Activated T-helper 1 cell treated with anti-CD3 and anti-CD28 coated beads, Interleukin-12 subunit alpha, Interleukin-12 subunit beta, Interleukin-2, Interleukin-4 antibody, amounts not matched to agents 30 ng/mL and 10 ng/mL and 1 ng/mL, durations not matched to agents 14 hours and 24 hours and 36 hours (primary cell): ENCODE measurements at regions of chr3 and their contacts with region 1.

Region 1: DNA sequence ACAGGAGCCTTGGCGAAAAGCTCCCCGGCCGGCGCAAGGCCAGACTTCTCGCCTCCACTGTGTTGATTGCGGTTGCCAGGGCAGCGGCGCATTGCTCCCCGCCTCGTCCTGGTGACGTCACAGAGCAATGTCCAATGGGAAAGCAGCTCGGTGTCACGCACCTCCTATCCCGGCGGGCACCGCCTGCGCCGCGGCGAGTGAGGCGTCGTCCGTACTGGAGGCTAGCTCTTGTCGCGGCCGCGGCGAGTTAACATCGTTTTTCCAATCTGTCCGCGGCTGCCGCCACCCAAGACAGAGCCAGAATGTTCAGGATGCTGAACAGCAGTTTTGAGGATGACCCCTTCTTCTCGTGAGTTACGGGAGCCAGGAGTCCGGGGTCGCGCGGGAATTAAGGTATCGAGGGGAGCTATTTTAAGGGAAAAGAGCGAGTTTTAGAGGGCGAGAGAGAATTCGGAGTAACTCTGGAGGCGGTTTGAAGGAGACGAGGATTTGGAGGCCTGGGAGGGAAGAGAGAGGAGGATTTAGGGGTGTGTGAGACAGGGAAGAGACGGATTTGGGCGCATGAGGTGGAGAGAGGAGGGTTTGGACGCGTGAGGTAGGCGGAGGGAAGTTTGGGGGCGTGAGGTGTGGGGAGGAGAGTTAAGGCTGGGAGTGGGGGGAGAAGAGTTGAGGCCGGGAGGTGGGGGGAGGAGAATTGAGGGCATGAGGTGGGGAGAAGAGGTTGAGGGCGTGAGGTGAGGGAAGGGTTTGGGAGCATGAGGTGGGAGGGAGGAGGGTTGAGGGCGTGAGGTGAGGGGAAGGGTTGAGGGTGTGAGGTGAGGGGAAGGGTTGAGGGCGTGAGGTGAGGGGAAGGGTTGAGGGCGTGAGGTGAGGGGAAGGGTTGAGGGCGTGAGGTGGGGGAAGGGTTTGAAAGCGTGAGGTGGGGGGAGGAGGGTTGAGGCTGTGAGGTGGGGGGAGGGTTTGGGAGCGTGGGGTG is at the start of gene MLF1:
- DNase-seq: peak; percentile 80
- H3K4me3 Mint-ChIP-seq: peak within 1 kb of the TSS; percentile 85
- H3K27ac Mint-ChIP-seq: peak within 1 kb of the TSS; percentile 83
- H3K4me1 Mint-ChIP-seq: peaks cover 13% of the 10 kb centered on the region
- H3K27me3 Mint-ChIP-seq: peaks cover 33% of the 10 kb centered on the region
- total RNA-seq, gene MLF1: 0.78 and 0.83 TPM in 2 replicates

Region 2: GRCh38 chr3:158539414-158540014 is 31.8 kb before region 1 on chr3:
- intact Hi-C with region 1: loop called (anchors 2 kb)
- DNase-seq: peak; percentile 6
- H3K4me3 Mint-ChIP-seq: no peak overlapping the region
- H3K27ac Mint-ChIP-seq: no peak overlapping the region
- H3K4me1 Mint-ChIP-seq: no peaks in the 10 kb centered on the region
- H3K27me3 Mint-ChIP-seq: no peaks in the 10 kb centered on the region